ENCODE measurements at regions of chr9 and their contacts with region 1.

Region 1: DNA sequence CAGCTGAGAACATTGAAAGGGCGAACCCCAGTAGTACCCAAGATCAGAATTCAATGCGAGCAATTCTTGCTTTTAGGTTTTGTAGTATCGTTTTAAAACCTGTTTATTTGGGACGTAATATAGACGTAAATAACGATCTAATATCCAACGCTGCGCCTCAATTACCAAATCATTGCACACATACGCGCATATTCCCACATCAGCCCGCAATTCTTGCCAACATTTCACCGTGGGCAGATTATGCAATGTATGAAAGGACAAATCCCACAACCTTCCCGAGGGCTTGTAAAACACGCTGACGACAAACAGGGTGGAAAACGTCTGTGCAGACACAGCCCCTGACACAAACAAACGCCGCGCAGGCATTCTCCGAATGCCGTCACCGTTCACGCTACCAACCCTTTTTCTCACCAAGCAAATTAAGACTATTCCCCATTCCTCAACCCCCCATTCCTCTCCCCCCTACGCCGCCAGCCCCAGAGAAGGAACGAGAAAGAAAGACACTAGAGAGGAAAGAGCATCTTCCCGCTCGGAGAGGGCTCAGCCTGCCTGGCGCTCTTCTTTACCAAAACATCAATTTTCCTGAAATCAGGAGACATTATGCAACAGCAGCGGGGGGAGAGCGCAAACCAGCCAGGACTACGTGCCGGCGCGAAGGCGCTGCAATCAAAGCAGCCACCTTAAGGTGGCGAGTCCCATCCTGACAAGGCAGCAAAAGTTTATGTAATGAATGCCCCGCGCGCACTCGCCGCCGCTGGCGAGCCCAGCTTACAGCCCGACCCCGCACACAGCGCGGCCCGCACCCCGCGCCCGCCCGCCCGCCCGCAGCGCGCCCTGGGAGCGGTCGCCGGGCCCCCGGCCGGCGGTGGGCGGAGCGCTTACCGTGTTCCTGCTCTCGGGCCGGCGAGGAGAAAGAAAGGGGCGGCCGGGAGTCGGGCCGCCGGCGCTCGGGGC is 597 bp downstream of the NFIL3 start:
- DNase-seq: peak; percentile 83
- H3K4me3 Mint-ChIP-seq: peak overlapping the region; percentile 100
- H3K27ac Mint-ChIP-seq: peak overlapping the region; percentile 99
- H3K4me1 Mint-ChIP-seq: peaks cover 41% of the 10 kb centered on the region
- H3K27me3 Mint-ChIP-seq: no peaks in the 10 kb centered on the region
- CTCF ChIP-seq: peak; percentile 24

Region 2: DNA sequence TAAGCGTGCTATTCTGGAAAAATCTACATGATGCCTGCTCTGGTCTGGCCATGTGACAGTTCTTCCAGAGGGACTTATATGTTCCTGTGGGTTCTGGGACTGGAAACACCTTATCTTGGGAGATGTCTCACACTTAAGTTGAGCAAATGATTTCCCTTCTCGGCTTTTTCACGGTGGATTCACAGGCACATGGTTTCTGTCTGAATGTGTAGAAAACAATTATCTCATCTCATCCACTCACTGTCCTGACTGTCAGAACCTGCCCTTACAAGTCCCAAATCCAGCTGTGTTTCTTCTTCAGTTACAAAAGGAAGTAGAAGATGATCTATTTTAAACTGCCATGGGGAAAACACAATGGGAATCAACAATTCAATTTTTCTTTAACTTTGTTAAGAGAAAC is 437.4 kb before region 1 on chr9:
- CTCF ChIA-PET with region 1: interaction called, 16 read pairs
- POLR2A ChIA-PET with region 1: interaction called, 16 read pairs
- intact Hi-C with region 1: loop called (anchors 1 kb)
- DNase-seq: no peak
- H3K4me3 Mint-ChIP-seq: no peak overlapping the region
- H3K27ac Mint-ChIP-seq: peak overlapping the region; percentile 89
- H3K4me1 Mint-ChIP-seq: peaks cover 38% of the 10 kb centered on the region
- H3K27me3 Mint-ChIP-seq: no peaks in the 10 kb centered on the region
- CTCF ChIP-seq: no peak

Region 3: DNA sequence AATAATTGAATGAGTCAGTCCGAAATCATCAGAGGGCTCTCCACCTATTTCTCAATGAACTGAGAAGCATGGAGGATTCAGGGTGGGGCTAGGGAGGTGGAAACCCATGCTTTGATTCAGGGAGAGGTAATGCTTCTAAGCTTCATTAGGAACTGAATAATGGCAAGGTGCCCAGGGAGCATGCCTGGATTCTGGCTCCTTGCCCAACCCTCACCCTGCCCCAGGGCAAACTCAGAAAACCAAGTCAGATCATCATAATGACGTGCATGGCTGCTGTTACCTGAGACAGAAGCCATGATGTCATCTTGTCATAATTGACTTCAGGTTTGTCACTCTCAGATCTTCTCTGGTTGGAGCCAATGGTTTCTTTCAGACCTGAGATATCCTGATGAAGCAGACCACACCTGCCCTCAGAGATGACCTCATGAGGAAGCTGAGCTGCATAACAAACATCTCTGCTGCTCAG is 421.9 kb before region 1 on chr9:
- CTCF ChIA-PET with region 1: interaction called, 6 read pairs
- POLR2A ChIA-PET with region 1: interaction called, 13 read pairs
- intact Hi-C with region 1: no loop called
- DNase-seq: peak; percentile 99
- H3K4me3 Mint-ChIP-seq: no peak overlapping the region
- H3K27ac Mint-ChIP-seq: peak overlapping the region; percentile 88
- H3K4me1 Mint-ChIP-seq: peaks cover 36% of the 10 kb centered on the region
- H3K27me3 Mint-ChIP-seq: no peaks in the 10 kb centered on the region
- CTCF ChIP-seq: no peak

Region 4: GRCh38 chr9:91273853-91274552 is 149.0 kb before region 1 on chr9:
- CTCF ChIA-PET with region 1: no interaction called
- POLR2A ChIA-PET with region 1: no interaction called
- intact Hi-C with region 1: loop called (anchors 10 kb)
- DNase-seq: peak; percentile 55
- H3K4me3 Mint-ChIP-seq: no peak overlapping the region
- H3K27ac Mint-ChIP-seq: no peak overlapping the region
- H3K4me1 Mint-ChIP-seq: peaks cover 4% of the 10 kb centered on the region
- H3K27me3 Mint-ChIP-seq: no peaks in the 10 kb centered on the region
- CTCF ChIP-seq: no peak

Region 5: DNA sequence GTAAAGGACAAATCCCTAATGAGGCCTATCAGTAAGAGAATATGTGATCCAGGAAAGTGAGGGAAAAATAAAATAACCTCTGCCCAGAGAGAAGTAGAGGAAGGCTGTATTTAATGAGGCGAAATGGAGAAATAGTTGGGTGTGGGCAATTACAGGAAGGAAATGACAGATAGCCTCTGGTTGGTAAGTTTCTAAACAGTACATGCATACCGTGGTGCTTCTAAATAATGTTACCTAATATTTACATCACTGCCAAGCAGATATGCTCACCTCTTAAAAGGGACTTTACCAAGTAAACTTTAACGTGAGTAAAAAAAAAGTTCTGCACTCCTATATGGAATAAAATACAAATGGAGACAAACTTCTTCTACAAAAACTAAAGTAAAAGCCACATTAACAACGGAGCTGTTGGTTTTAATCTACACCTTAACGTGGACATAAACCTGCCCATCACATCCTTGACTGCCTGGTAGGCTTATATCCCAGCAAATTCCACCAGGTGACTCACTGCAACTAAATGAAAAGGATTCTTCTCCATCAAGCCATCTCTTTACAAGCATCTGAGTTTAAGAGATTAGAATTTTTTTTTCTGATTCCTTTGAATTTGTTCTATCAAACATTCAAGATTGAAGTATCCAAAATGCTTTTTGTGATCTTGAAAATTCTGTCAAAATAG is 11.8 kb before region 1 on chr9:
- CTCF ChIA-PET with region 1: interaction called, 3 read pairs
- POLR2A ChIA-PET with region 1: interaction called, 13 read pairs
- intact Hi-C with region 1: no loop called
- DNase-seq: peak; percentile 55
- H3K4me3 Mint-ChIP-seq: no peak overlapping the region
- H3K27ac Mint-ChIP-seq: peak overlapping the region; percentile 79
- H3K4me1 Mint-ChIP-seq: peaks cover 43% of the 10 kb centered on the region
- H3K27me3 Mint-ChIP-seq: no peaks in the 10 kb centered on the region
- CTCF ChIP-seq: no peak

Region 6: DNA sequence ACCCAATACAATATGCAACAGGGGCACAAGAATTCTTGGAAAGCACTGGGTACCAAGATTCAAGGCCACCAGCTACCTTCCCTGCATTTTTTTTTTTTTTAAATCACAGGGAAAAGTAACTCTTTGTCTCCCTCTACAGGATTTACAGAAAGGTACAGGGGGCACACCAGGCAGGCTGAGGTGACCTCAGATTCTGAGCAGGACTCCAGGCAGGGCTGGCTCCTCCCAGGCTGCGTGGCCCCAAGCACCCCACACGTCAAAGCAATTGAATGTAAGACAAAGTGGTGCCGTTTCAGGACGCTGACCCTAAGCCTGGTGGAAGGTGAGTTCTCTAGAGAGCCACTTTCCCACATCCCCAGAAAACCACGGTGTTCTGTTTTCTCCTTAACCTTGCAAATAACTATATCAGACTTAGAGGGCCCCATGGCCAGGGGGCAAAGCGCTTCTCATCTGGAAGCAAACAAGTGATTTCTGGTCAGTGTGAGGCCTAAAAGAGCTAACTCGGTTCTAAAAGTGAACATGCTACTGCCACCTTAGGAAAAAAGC is 304.4 kb after region 1 on chr9:
- CTCF ChIA-PET with region 1: interaction called, 11 read pairs
- POLR2A ChIA-PET with region 1: interaction called, 3 read pairs
- intact Hi-C with region 1: no loop called
- DNase-seq: peak; percentile 62
- H3K4me3 Mint-ChIP-seq: no peak overlapping the region
- H3K27ac Mint-ChIP-seq: no peak overlapping the region
- H3K4me1 Mint-ChIP-seq: peaks cover 14% of the 10 kb centered on the region
- H3K27me3 Mint-ChIP-seq: no peaks in the 10 kb centered on the region
- CTCF ChIP-seq: peak; percentile 63